Testis (tissue), 5 donors: ENCODE measurements at regions of chr3 and their contacts with region 1.

Region 1: DNA sequence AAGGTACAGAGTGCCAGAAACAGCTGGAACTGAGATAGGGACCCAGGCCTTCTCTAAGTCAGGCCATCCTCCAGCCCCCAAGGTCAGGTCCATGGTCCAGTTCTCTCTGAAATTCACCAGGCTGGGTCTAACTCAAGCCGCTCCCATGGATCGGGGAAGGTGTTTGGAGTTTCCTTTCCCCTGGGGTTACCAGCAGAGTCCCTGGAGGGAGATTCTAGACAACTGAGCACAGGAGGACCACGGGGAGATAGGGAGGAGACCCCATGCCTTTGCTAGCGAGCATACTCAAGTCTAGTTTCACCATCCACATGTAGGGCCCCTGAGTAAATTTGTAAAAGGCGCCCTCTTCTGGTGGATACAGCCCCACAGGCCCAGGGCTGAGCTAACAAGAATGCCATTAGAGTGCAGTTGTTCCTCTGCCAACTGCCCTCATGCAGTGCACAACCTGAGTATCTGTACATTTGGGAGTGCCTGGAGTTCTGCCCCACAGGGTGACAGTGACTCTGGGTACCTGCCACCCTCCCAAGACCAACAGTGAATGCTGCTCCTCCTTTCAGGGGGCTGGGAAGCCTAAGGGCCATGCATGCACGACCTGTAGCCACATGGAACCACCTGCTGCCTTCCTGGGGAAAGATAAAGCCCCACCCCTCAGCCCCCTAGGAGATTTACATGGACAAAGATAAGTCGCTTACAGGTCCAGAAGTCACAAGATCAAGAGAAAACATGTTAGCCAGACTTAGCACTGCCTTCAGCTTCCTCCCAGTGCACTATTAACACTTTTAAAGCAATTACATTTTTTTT is 89.0 kb downstream of the IQSEC1 start:
- DNase-seq: peak; percentile 82
- H3K4me3 ChIP-seq: no peak overlapping the region
- H3K27ac ChIP-seq: no peak overlapping the region
- H3K4me1 ChIP-seq: peaks cover 3% of the 10 kb centered on the region
- H3K27me3 ChIP-seq: no peaks in the 10 kb centered on the region
- CTCF ChIP-seq: peak; percentile 37 to 66 (median 56)
- POLR2A ChIP-seq: no peak

Region 2: GRCh38 chr3:12875857-12876836 is 108.1 kb before region 1 on chr3:
- intact Hi-C with region 1: loop called (anchors 10 kb)
- DNase-seq: peak; percentile 74
- H3K4me3 ChIP-seq: peak overlapping the region; percentile 38 to 39
- H3K27ac ChIP-seq: no peak overlapping the region
- H3K4me1 ChIP-seq: peaks cover 26% of the 10 kb centered on the region
- H3K27me3 ChIP-seq: no peaks in the 10 kb centered on the region
- CTCF ChIP-seq: peak in 1 of 3 experiments; percentile 18
- POLR2A ChIP-seq: no peak

Region 3: DNA sequence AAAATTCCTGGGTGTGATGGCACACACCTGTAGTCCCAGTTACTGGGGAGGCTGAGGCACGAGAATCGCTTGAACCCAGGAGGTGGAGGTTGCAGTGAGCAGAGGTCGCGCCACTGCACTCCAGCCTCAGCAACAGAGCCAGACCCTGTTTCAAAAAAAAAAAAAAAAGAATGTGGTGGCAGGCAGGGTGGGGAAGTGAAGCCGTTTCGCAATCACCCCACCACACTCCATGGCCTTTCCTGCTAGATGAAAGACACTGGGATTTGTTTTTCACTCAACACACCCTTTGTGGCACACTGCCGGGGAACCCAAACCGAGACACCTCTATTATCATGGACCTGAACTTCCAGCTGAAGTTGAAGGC is 261.4 kb after region 1 on chr3:
- intact Hi-C with region 1: no loop called
- DNase-seq: no peak
- H3K4me3 ChIP-seq: no peak overlapping the region
- H3K27ac ChIP-seq: no peak overlapping the region
- H3K4me1 ChIP-seq: no peaks in the 10 kb centered on the region
- H3K27me3 ChIP-seq: no peaks in the 10 kb centered on the region
- CTCF ChIP-seq: no peak
- POLR2A ChIP-seq: no peak